HepG2 (cell line): ENCODE measurements at regions of chr4 and their contacts with region 1.

Region 1: DNA sequence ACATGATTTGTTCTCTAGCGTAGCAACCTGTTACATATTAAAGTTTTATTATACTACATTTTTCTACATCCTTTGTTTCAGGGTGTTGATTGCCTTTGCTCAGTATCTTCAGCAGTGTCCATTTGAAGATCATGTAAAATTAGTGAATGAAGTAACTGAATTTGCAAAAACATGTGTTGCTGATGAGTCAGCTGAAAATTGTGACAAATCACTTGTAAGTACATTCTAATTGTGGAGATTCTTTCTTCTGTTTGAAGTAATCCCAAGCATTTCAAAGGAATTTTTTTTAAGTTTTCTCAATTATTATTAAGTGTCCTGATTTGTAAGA is 2.4 kb downstream of the ALB start:
- DNase-seq: no peak
- ATAC-seq: no peak
- H3K4me3 ChIP-seq: peak overlapping the region; percentile 68 to 86 (median 71)
- H3K27ac ChIP-seq: peak overlapping the region; percentile 89
- H3K4me1 ChIP-seq: peaks cover 58% of the 10 kb centered on the region
- H3K27me3 ChIP-seq: no peaks in the 10 kb centered on the region
- CTCF ChIP-seq: no peak
- EP300 ChIP-seq: no peak
- POLR2A ChIP-seq: no peak; a peak in 1 of 4 replicates
- RAD21 ChIP-seq: no peak

Region 2: DNA sequence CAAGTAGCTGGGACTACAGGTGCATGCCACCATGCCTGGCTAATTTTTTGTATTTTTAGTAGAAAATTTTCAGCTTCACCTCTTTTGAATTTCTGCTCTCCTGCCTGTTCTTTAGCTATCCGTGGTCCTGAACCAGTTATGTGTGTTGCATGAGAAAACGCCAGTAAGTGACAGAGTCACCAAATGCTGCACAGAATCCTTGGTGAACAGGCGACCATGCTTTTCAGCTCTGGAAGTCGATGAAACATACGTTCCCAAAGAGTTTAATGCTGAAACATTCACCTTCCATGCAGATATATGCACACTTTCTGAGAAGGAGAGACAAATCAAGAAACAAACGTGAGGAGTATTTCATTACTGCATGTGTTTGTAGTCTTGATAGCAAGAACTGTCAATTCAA is 11.5 kb after region 1 on chr4:
- CTCF ChIA-PET with region 1: no interaction called
- POLR2A ChIA-PET with region 1: interaction called, 12 read pairs
- in situ Hi-C with region 1: no loop called
- intact Hi-C with region 1: no loop called
- DNase-seq: no peak
- ATAC-seq: no peak
- H3K4me3 ChIP-seq: peak overlapping the region in 2 of 3 experiments; percentile 21 to 46; a peak in 4 of 6 replicates
- H3K27ac ChIP-seq: peak overlapping the region; percentile 89
- H3K4me1 ChIP-seq: peaks cover 46% of the 10 kb centered on the region
- H3K27me3 ChIP-seq: no peaks in the 10 kb centered on the region
- CTCF ChIP-seq: no peak
- EP300 ChIP-seq: no peak
- POLR2A ChIP-seq: peak in 1 of 2 experiments; percentile 74; a peak in 2 of 4 replicates
- RAD21 ChIP-seq: no peak

Region 3: GRCh38 chr4:73446336-73446938 is 39.9 kb after region 1 on chr4:
- CTCF ChIA-PET with region 1: interaction called, 6 read pairs
- POLR2A ChIA-PET with region 1: interaction called, 5 read pairs
- in situ Hi-C with region 1: no loop called
- intact Hi-C with region 1: loop called (anchors 5 kb)
- DNase-seq: peak; percentile 78
- ATAC-seq: peak; percentile 64
- H3K4me3 ChIP-seq: no peak overlapping the region; a peak in 1 of 6 replicates
- H3K27ac ChIP-seq: peak overlapping the region; percentile 38
- H3K4me1 ChIP-seq: peaks cover 82% of the 10 kb centered on the region
- H3K27me3 ChIP-seq: no peaks in the 10 kb centered on the region
- CTCF ChIP-seq: peak; percentile 75
- EP300 ChIP-seq: no peak
- POLR2A ChIP-seq: peak in 1 of 2 experiments; percentile 39; a peak in 2 of 4 replicates
- RAD21 ChIP-seq: peak; percentile 75